Activated CD4-positive, alpha-beta memory T cell treated with anti-CD3 and anti-CD28 coated beads, Interleukin-2, amount 10 ng/mL, durations not matched to agents 7 days and 5 days (primary cell): ENCODE measurements at regions of chr22 and their contacts with region 1.

Region 1: GRCh38 chr22:40346178-40347118 is at the start of gene ADSL:
- DNase-seq: peak; percentile 88
- H3K4me3 Mint-ChIP-seq: peak within 1 kb of the TSS; percentile 88
- H3K27ac Mint-ChIP-seq: peak within 1 kb of the TSS; percentile 96
- H3K4me1 Mint-ChIP-seq: peaks cover 50% of the 10 kb centered on the region
- H3K27me3 Mint-ChIP-seq: no peaks in the 10 kb centered on the region
- total RNA-seq, gene ADSL: 95.0 to 105 TPM

Region 2: GRCh38 chr22:39532215-39533071 is 814.0 kb before region 1 on chr22 and contains the start of gene RPS19BP1:
- CTCF ChIA-PET with region 1: interaction called, 11 read pairs
- POLR2A ChIA-PET with region 1: no interaction called
- DNase-seq: peak; percentile 100
- H3K4me3 Mint-ChIP-seq: peak within 1 kb of the TSS; percentile 94
- H3K27ac Mint-ChIP-seq: peak within 1 kb of the TSS; percentile 86
- H3K4me1 Mint-ChIP-seq: peaks cover 59% of the 10 kb centered on the region
- H3K27me3 Mint-ChIP-seq: no peaks in the 10 kb centered on the region
- total RNA-seq, gene RPS19BP1: 54.3 to 60.7 TPM

Region 3: GRCh38 chr22:40050258-40050657 is 296.2 kb before region 1 on chr22:
- CTCF ChIA-PET with region 1: interaction called, 17 read pairs
- POLR2A ChIA-PET with region 1: interaction called, 121 read pairs
- DNase-seq: no peak
- H3K4me3 Mint-ChIP-seq: no peak overlapping the region
- H3K27ac Mint-ChIP-seq: peak overlapping the region; percentile 4
- H3K4me1 Mint-ChIP-seq: peaks cover 56% of the 10 kb centered on the region
- H3K27me3 Mint-ChIP-seq: no peaks in the 10 kb centered on the region

Region 4: GRCh38 chr22:40107851-40108378 is 238.5 kb before region 1 on chr22:
- CTCF ChIA-PET with region 1: interaction called, 8 read pairs
- POLR2A ChIA-PET with region 1: interaction called, 15 read pairs
- DNase-seq: peak; percentile 41
- H3K4me3 Mint-ChIP-seq: peak overlapping the region; percentile 70
- H3K27ac Mint-ChIP-seq: peak overlapping the region; percentile 72
- H3K4me1 Mint-ChIP-seq: peaks cover 51% of the 10 kb centered on the region
- H3K27me3 Mint-ChIP-seq: no peaks in the 10 kb centered on the region

Region 5: GRCh38 chr22:40156001-40156516 is 190.4 kb before region 1 on chr22:
- CTCF ChIA-PET with region 1: no interaction called
- POLR2A ChIA-PET with region 1: no interaction called
- DNase-seq: no peak
- H3K4me3 Mint-ChIP-seq: no peak overlapping the region
- H3K27ac Mint-ChIP-seq: peak overlapping the region; percentile 15
- H3K4me1 Mint-ChIP-seq: peaks cover 10% of the 10 kb centered on the region
- H3K27me3 Mint-ChIP-seq: no peaks in the 10 kb centered on the region

Region 6: GRCh38 chr22:40215266-40215665 is 131.2 kb before region 1 on chr22:
- CTCF ChIA-PET with region 1: interaction called, 3 read pairs
- POLR2A ChIA-PET with region 1: interaction called, 14 read pairs
- DNase-seq: no peak
- H3K4me3 Mint-ChIP-seq: no peak overlapping the region
- H3K27ac Mint-ChIP-seq: peak overlapping the region; percentile 73
- H3K4me1 Mint-ChIP-seq: peaks cover 73% of the 10 kb centered on the region
- H3K27me3 Mint-ChIP-seq: no peaks in the 10 kb centered on the region

Region 7: DNA sequence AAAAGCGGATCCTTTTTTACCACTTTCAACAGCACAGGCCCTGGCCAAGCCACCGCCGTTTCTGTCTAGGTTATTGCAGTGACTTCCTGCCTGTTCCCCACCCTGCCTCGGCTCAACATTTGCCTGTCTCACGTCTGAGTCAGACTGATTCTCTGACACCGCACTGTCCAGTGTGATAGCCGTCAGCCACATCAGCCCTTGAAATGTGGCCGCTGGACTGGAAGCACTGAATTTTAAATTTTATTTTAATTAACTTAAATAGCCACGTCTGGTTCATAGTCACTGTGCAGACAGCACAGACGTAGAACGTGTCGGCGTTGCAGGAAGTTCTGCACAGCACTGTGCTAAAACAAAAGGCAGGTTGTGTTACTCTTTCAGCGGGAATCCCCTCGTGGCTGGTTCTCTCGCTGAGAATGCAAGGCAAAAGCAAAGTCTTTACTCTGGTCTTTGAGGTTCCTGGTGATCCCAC is 56.4 kb before region 1 on chr22:
- CTCF ChIA-PET with region 1: interaction called, 10 read pairs
- POLR2A ChIA-PET with region 1: interaction called, 27 read pairs
- DNase-seq: peak; percentile 75
- H3K4me3 Mint-ChIP-seq: peak overlapping the region; percentile 40
- H3K27ac Mint-ChIP-seq: peak overlapping the region; percentile 89
- H3K4me1 Mint-ChIP-seq: peaks cover 61% of the 10 kb centered on the region
- H3K27me3 Mint-ChIP-seq: no peaks in the 10 kb centered on the region

Region 8: GRCh38 chr22:40332319-40332781 is 14.1 kb before region 1 on chr22:
- CTCF ChIA-PET with region 1: interaction called, 7 read pairs
- POLR2A ChIA-PET with region 1: interaction called, 58 read pairs
- DNase-seq: no peak
- H3K4me3 Mint-ChIP-seq: no peak overlapping the region
- H3K27ac Mint-ChIP-seq: peak overlapping the region; percentile 68
- H3K4me1 Mint-ChIP-seq: peaks cover 82% of the 10 kb centered on the region
- H3K27me3 Mint-ChIP-seq: no peaks in the 10 kb centered on the region

Region 9: DNA sequence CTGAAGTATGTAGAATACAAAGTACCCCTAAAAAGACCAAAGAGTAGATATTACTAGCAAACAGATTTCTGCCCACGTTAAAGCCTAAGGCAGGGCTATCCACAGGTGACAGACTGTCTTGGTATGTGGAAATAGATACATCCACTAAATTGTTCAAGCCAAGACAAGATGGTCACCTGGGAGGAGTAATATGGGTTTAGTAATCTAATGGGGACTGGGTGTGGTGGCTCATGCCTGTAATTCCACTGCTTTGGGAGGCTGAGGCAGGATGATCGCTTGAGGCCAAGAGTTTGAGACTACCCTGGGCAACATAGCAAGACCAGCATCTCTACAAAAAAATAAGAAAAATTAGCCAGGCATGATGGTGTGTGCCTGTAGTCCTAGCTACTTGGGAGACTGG is 31.5 kb after region 1 on chr22:
- CTCF ChIA-PET with region 1: no interaction called
- POLR2A ChIA-PET with region 1: no interaction called
- DNase-seq: no peak
- H3K4me3 Mint-ChIP-seq: no peak overlapping the region
- H3K27ac Mint-ChIP-seq: no peak overlapping the region
- H3K4me1 Mint-ChIP-seq: peaks cover 7% of the 10 kb centered on the region
- H3K27me3 Mint-ChIP-seq: no peaks in the 10 kb centered on the region